ENCODE measurements at regions of chr12 and their contacts with region 1.

Region 1: GRCh38 chr12:121499929-121500793 is 80.7 kb downstream of the KDM2B start:
- H3K4me3 Mint-ChIP-seq: no peak overlapping the region
- H3K27ac Mint-ChIP-seq: no peak overlapping the region
- H3K4me1 Mint-ChIP-seq: peaks cover 12% of the 10 kb centered on the region
- H3K27me3 Mint-ChIP-seq: no peaks in the 10 kb centered on the region

Region 2: GRCh38 chr12:121441553-121441952 is 58.6 kb before region 1 on chr12:
- intact Hi-C with region 1: no loop called
- H3K4me3 Mint-ChIP-seq: no peak overlapping the region
- H3K27ac Mint-ChIP-seq: no peak overlapping the region
- H3K4me1 Mint-ChIP-seq: peaks cover 34% of the 10 kb centered on the region
- H3K27me3 Mint-ChIP-seq: no peaks in the 10 kb centered on the region

Region 3: GRCh38 chr12:121536899-121537813 is 37.0 kb after region 1 on chr12:
- intact Hi-C with region 1: loop called (anchors 5 kb)
- H3K4me3 Mint-ChIP-seq: peak overlapping the region; percentile 78
- H3K27ac Mint-ChIP-seq: peak overlapping the region; percentile 92
- H3K4me1 Mint-ChIP-seq: peaks cover 83% of the 10 kb centered on the region
- H3K27me3 Mint-ChIP-seq: no peaks in the 10 kb centered on the region

Measured in dendritic cell treated with granulocyte-macrophage colony-stimulating factor and Interleukin-4, amounts not matched to agents 40 ng/mL and 50 ng/mL, for 4 days (primary cell).